ENCODE measurements at regions of chr12 and their contacts with region 1.

Region 1: DNA sequence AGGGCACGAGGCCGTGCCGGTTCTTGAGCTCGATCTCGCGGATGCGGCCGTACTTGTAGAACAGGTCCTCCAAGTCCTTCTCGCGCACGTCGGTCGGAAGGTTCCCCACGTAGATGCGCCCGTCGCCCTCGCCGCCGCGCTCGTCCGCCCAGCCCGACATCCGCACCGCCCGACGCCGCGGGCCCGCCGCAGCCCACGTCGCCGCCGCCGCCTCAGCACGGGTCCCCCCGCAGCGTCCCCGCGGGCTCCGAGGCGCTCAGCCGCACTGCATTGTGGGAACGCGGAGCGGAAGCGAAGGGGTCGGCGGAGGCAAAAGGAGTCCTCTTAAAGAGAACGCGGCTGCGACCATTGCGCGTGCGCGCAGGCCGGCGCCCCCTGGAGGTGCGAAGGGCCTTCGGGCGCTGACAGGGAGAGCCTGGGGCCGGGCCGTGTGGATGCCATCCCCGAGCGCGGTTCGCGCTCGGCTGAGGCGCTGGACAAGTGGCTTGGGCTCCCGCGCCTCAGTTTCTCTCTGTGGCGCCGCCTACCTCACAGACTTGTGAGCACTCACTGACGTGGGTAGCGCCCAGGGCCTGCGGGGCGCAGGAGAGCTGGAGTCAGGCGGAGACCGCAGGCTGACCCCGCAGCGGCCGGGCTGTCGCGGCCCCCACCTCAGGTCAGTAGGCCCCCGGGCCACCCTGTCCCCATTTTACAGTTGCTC is at the start of gene SRSF9:
- DNase-seq: peak; percentile 99
- ATAC-seq: peak; percentile 87
- H3K4me3 ChIP-seq: peak within 1 kb of the TSS; percentile 62 to 81 (median 74)
- H3K4me3 Mint-ChIP-seq: peak within 1 kb of the TSS; percentile 91
- H3K27ac ChIP-seq: peak within 1 kb of the TSS; percentile 80 to 94
- H3K27ac Mint-ChIP-seq: peak within 1 kb of the TSS; percentile 89
- H3K4me1 ChIP-seq: peaks cover 20% of the 10 kb centered on the region in 2 donors
- H3K4me1 Mint-ChIP-seq: peaks cover 33% of the 10 kb centered on the region
- H3K27me3 ChIP-seq: no peaks in the 10 kb centered on the region
- H3K27me3 Mint-ChIP-seq: no peaks in the 10 kb centered on the region
- CTCF ChIP-seq: peak; percentile 95
- total RNA-seq, gene SRSF9: 151 and 157 TPM in 2 replicates

Region 2: GRCh38 chr12:119412811-119413794 is 1056.5 kb before region 1 on chr12:
- CTCF ChIA-PET with region 1: no interaction called
- POLR2A ChIA-PET with region 1: no interaction called
- intact Hi-C with region 1: no loop called
- DNase-seq: peak; percentile 26
- ATAC-seq: no peak
- H3K4me3 ChIP-seq: no peak overlapping the region
- H3K4me3 Mint-ChIP-seq: no peak overlapping the region
- H3K27ac ChIP-seq: no peak overlapping the region
- H3K27ac Mint-ChIP-seq: no peak overlapping the region
- H3K4me1 ChIP-seq: no peaks in the 10 kb centered on the region
- H3K4me1 Mint-ChIP-seq: no peaks in the 10 kb centered on the region
- H3K27me3 ChIP-seq: peaks cover 0 to 6% (median 3%) of the 10 kb centered on the region in 4 experiments
- H3K27me3 Mint-ChIP-seq: peaks cover 11% of the 10 kb centered on the region
- CTCF ChIP-seq: peak; percentile 49

Region 3: GRCh38 chr12:120317224-120318105 is 152.1 kb before region 1 on chr12:
- CTCF ChIA-PET with region 1: interaction called, 4 read pairs
- POLR2A ChIA-PET with region 1: no interaction called
- intact Hi-C with region 1: loop called (anchors 1 kb)
- DNase-seq: peak; percentile 99
- ATAC-seq: peak; percentile 99
- H3K4me3 ChIP-seq: peak overlapping the region; percentile 55 to 78 (median 66)
- H3K4me3 Mint-ChIP-seq: peak overlapping the region; percentile 76
- H3K27ac ChIP-seq: peak overlapping the region; percentile 86 to 95
- H3K27ac Mint-ChIP-seq: peak overlapping the region; percentile 75
- H3K4me1 ChIP-seq: peaks cover 10 to 13% of the 10 kb centered on the region in 2 donors
- H3K4me1 Mint-ChIP-seq: peaks cover 14% of the 10 kb centered on the region
- H3K27me3 ChIP-seq: peaks cover 0 to 6% (median 0%) of the 10 kb centered on the region in 4 experiments
- H3K27me3 Mint-ChIP-seq: peaks cover 3% of the 10 kb centered on the region
- CTCF ChIP-seq: peak; percentile 50

Region 4: GRCh38 chr12:120394483-120395367 is 74.9 kb before region 1 on chr12:
- CTCF ChIA-PET with region 1: no interaction called
- POLR2A ChIA-PET with region 1: no interaction called
- intact Hi-C with region 1: no loop called
- DNase-seq: no peak
- ATAC-seq: no peak
- H3K4me3 ChIP-seq: no peak overlapping the region
- H3K4me3 Mint-ChIP-seq: no peak overlapping the region
- H3K27ac ChIP-seq: no peak overlapping the region
- H3K27ac Mint-ChIP-seq: no peak overlapping the region
- H3K4me1 ChIP-seq: no peaks in the 10 kb centered on the region
- H3K4me1 Mint-ChIP-seq: no peaks in the 10 kb centered on the region
- H3K27me3 ChIP-seq: peaks cover 0 to 17% (median 0%) of the 10 kb centered on the region in 4 experiments
- H3K27me3 Mint-ChIP-seq: peaks cover 32% of the 10 kb centered on the region
- CTCF ChIP-seq: no peak

Region 5: GRCh38 chr12:120437754-120438494 is 31.7 kb before region 1 on chr12 and contains the start of gene COX6A1:
- CTCF ChIA-PET with region 1: interaction called, 8 read pairs
- POLR2A ChIA-PET with region 1: no interaction called
- intact Hi-C with region 1: loop called (anchors 1 kb)
- DNase-seq: peak; percentile 98
- ATAC-seq: peak; percentile 96
- H3K4me3 ChIP-seq: peak within 1 kb of the TSS; percentile 73 to 86 (median 83)
- H3K4me3 Mint-ChIP-seq: peak within 1 kb of the TSS; percentile 91
- H3K27ac ChIP-seq: peak within 1 kb of the TSS; percentile 70 to 84
- H3K27ac Mint-ChIP-seq: peak within 1 kb of the TSS; percentile 96
- H3K4me1 ChIP-seq: peaks cover 18 to 20% of the 10 kb centered on the region in 2 donors
- H3K4me1 Mint-ChIP-seq: peaks cover 26% of the 10 kb centered on the region
- H3K27me3 ChIP-seq: peaks cover 0 to 5% (median 2%) of the 10 kb centered on the region in 4 experiments
- H3K27me3 Mint-ChIP-seq: peaks cover 8% of the 10 kb centered on the region
- CTCF ChIP-seq: peak; percentile 9
- total RNA-seq, gene COX6A1: 132 and 137 TPM in 2 replicates

Region 6: DNA sequence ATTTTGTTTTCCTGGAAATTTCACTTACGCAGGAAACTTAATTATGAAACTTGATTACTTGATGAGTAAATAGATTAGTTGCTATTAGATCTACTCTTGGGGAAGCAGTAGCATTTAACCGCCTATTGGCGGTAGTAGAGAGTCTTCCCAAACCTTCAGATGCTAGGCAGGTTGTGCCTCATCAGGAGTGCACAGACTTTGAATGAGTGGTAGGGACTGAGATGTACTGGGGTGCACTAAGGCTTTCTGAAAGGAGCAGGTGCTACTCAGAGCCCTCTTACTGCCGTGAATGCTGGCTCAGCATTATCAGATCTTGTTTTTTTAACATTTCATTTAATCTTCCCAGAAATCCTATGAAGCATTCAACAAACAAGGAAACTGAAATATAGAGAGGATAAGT is 15.6 kb before region 1 on chr12:
- CTCF ChIA-PET with region 1: interaction called, 39 read pairs
- POLR2A ChIA-PET with region 1: interaction called, 5 read pairs
- intact Hi-C with region 1: no loop called
- DNase-seq: peak; percentile 47
- ATAC-seq: peak; percentile 76
- H3K4me3 ChIP-seq: no peak overlapping the region
- H3K4me3 Mint-ChIP-seq: no peak overlapping the region
- H3K27ac ChIP-seq: no peak overlapping the region
- H3K27ac Mint-ChIP-seq: no peak overlapping the region
- H3K4me1 ChIP-seq: peaks cover 0 to 4% of the 10 kb centered on the region in 2 donors
- H3K4me1 Mint-ChIP-seq: peaks cover 11% of the 10 kb centered on the region
- H3K27me3 ChIP-seq: no peaks in the 10 kb centered on the region
- H3K27me3 Mint-ChIP-seq: no peaks in the 10 kb centered on the region
- CTCF ChIP-seq: peak; percentile 81

Region 7: DNA sequence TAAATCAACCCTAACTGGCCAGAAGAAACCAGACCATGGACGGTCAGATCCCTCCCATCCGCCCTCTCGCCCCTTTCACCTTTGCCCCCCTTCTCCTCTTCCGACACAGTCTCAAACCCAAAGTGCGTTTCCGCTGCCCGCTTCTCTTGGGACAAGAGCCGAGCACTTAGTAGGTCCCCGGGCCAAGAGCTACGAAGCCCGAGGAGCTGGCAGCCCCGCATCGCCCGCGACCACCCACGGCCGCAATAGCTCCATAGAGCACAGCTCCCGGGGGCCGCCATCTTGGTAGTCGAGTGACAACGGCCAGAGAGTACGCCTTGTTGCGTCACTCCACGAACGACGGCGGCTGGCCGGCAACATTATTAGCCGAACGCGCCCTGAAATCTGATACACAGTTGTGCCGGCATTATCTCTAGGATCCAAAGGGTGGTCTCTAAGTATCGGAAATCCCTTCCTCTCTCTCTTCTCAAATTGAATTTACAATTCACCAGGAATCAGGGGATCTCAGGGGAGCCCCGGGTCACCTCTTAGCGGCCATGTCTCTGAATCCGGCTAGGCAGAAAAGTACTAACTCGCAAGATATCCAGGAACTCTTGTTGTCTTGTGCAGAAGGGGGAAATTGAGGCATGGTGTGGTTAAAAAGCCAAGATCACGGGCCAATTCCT is 59.4 kb after region 1 on chr12 and contains the start of gene COQ5:
- CTCF ChIA-PET with region 1: interaction called, 3 read pairs
- POLR2A ChIA-PET with region 1: interaction called, 4 read pairs
- intact Hi-C with region 1: loop called (anchors 2 kb)
- DNase-seq: peak; percentile 89
- ATAC-seq: peak; percentile 99
- H3K4me3 ChIP-seq: peak within 1 kb of the TSS; percentile 69 to 93 (median 88)
- H3K4me3 Mint-ChIP-seq: peak within 1 kb of the TSS; percentile 100
- H3K27ac ChIP-seq: peak within 1 kb of the TSS; percentile 75 to 86
- H3K27ac Mint-ChIP-seq: peak within 1 kb of the TSS; percentile 99
- H3K4me1 ChIP-seq: peaks cover 8 to 17% of the 10 kb centered on the region in 2 donors
- H3K4me1 Mint-ChIP-seq: peaks cover 23% of the 10 kb centered on the region
- H3K27me3 ChIP-seq: no peaks in the 10 kb centered on the region
- H3K27me3 Mint-ChIP-seq: no peaks in the 10 kb centered on the region
- CTCF ChIP-seq: no peak
- total RNA-seq, gene COQ5: 22.1 and 25.4 TPM in 2 replicates

Region 8: GRCh38 chr12:121568971-121569751 is 1099.6 kb after region 1 on chr12:
- CTCF ChIA-PET with region 1: no interaction called
- POLR2A ChIA-PET with region 1: interaction called, 10 read pairs
- intact Hi-C with region 1: no loop called
- DNase-seq: no peak
- ATAC-seq: no peak
- H3K4me3 ChIP-seq: no peak overlapping the region
- H3K4me3 Mint-ChIP-seq: no peak overlapping the region
- H3K27ac ChIP-seq: no peak overlapping the region
- H3K27ac Mint-ChIP-seq: peak overlapping the region; percentile 10
- H3K4me1 ChIP-seq: no peaks in the 10 kb centered on the region
- H3K4me1 Mint-ChIP-seq: peaks cover 4% of the 10 kb centered on the region
- H3K27me3 ChIP-seq: no peaks in the 10 kb centered on the region
- H3K27me3 Mint-ChIP-seq: no peaks in the 10 kb centered on the region
- CTCF ChIP-seq: no peak